Gastrocnemius medialis (tissue), 4 donors: ENCODE measurements at regions of chr14 and their contacts with region 1.

Region 1: GRCh38 chr14:31084385-31084784 is 58.2 kb upstream of the STRN3 start:
- DNase-seq: no peak
- ATAC-seq: no peak
- H3K4me3 ChIP-seq: no peak overlapping the region
- H3K27ac ChIP-seq: no peak overlapping the region
- H3K4me1 ChIP-seq: peaks cover 0 to 3% of the 10 kb centered on the region in 2 donors
- H3K27me3 ChIP-seq: no peaks in the 10 kb centered on the region
- CTCF ChIP-seq: no peak
- POLR2A ChIP-seq: no peak

Region 2: GRCh38 chr14:30974628-30975027 is 109.8 kb before region 1 on chr14:
- in situ Hi-C with region 1: loop called in 1 of 4 experiments (anchors 5 kb)
- intact Hi-C with region 1: no loop called
- DNase-seq: no peak
- ATAC-seq: no peak
- H3K4me3 ChIP-seq: no peak overlapping the region
- H3K27ac ChIP-seq: peak overlapping the region in 1 of 4 donors; percentile 6
- H3K4me1 ChIP-seq: peaks cover 21 to 28% of the 10 kb centered on the region in 2 donors
- H3K27me3 ChIP-seq: no peaks in the 10 kb centered on the region
- CTCF ChIP-seq: no peak
- POLR2A ChIP-seq: no peak

Region 3: GRCh38 chr14:30982533-30982932 is 101.9 kb before region 1 on chr14:
- in situ Hi-C with region 1: loop called (anchors 5 kb)
- intact Hi-C with region 1: loop called (anchors 1 kb)
- DNase-seq: no peak
- ATAC-seq: no peak
- H3K4me3 ChIP-seq: no peak overlapping the region
- H3K27ac ChIP-seq: peak overlapping the region in 1 of 4 donors; percentile 25
- H3K4me1 ChIP-seq: no peaks in the 10 kb centered on the region
- H3K27me3 ChIP-seq: no peaks in the 10 kb centered on the region
- CTCF ChIP-seq: no peak
- POLR2A ChIP-seq: no peak

Region 4: GRCh38 chr14:31026395-31027118 is 57.8 kb before region 1 on chr14:
- in situ Hi-C with region 1: no loop called
- intact Hi-C with region 1: loop called (anchors 2 kb)
- DNase-seq: peak; percentile 96 to 98
- ATAC-seq: peak; percentile 86 to 94
- H3K4me3 ChIP-seq: peak overlapping the region; percentile 90 to 98 (median 92)
- H3K27ac ChIP-seq: peak overlapping the region; percentile 95 to 100 (median 100)
- H3K4me1 ChIP-seq: peaks cover 28 to 29% of the 10 kb centered on the region in 2 donors
- H3K27me3 ChIP-seq: no peaks in the 10 kb centered on the region
- CTCF ChIP-seq: peak in 2 of 5 experiments; percentile 6 to 9
- POLR2A ChIP-seq: peak; percentile 58 to 85

Region 5: DNA sequence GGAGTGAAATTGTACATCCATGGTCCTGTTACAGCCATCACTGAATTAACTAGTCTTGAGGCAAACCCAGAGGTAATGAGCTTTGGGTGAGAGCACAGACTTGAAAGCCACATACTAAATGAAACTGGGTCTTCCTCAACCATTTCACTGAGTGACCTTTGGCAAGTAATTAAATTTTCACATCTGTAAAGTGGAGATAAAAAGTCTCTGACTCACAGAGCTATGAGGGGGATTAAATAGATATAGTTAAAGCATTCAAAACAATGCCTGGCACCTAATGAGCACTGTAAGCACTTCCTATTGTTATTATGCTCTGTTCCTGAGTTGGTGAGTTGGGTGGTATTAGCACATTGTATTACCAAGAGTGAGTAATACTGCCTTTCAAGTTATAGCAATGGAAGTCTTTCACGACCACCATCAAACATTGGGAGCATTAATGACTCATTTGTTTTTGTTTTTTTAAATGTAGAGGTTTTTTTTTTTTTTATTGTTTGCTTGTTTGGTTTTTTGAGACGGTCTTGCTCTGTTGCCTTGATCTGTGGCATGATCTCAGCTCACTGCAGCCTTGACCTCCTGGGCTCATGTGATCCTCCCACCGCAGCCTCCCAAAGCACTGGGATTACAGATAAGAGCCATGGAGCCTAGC is 45.7 kb before region 1 on chr14:
- in situ Hi-C with region 1: no loop called
- intact Hi-C with region 1: no loop called
- DNase-seq: no peak
- ATAC-seq: peak in 1 of 2 donors; percentile 56
- H3K4me3 ChIP-seq: no peak overlapping the region
- H3K27ac ChIP-seq: no peak overlapping the region
- H3K4me1 ChIP-seq: peaks cover 0 to 5% of the 10 kb centered on the region in 2 donors
- H3K27me3 ChIP-seq: no peaks in the 10 kb centered on the region
- CTCF ChIP-seq: no peak
- POLR2A ChIP-seq: no peak